Activated naive CD4-positive, alpha-beta T cell treated with anti-CD3 and anti-CD28 coated beads for 36 hours (primary cell): ENCODE measurements at regions of chr2 and their contacts with region 1.

Region 1: GRCh38 chr2:172985139-172985901 is 90.3 kb upstream of the MAP3K20 start:
- DNase-seq: no peak
- H3K4me3 Mint-ChIP-seq: no peak overlapping the region
- H3K27ac Mint-ChIP-seq: peak overlapping the region; percentile 43
- H3K4me1 Mint-ChIP-seq: peaks cover 13% of the 10 kb centered on the region
- H3K27me3 Mint-ChIP-seq: no peaks in the 10 kb centered on the region

Region 2: GRCh38 chr2:172938713-172939375 is 46.5 kb before region 1 on chr2:
- CTCF ChIA-PET with region 1: no interaction called
- intact Hi-C with region 1: no loop called
- DNase-seq: no peak
- H3K4me3 Mint-ChIP-seq: no peak overlapping the region
- H3K27ac Mint-ChIP-seq: no peak overlapping the region
- H3K4me1 Mint-ChIP-seq: peaks cover 10% of the 10 kb centered on the region
- H3K27me3 Mint-ChIP-seq: no peaks in the 10 kb centered on the region

Region 3: DNA sequence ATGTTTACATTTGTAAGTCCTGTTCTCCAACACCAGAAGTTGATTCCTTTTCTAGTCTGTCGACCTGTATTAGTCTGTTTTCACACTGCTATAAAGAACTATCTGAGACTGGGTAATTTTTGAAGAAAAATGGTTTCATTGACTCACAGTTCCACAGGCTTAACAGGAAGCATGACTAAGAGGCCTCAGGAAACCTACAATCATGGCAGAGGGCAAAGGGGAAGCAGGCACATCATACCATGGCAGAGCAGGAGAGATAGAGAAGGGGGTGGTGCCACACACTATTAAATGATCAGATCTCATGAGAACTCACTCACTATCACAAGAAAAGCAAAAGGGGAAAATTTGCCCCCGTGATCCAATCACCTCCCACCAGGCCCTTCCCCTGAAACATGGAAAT is 22.5 kb before region 1 on chr2:
- CTCF ChIA-PET with region 1: interaction called, 3 read pairs
- intact Hi-C with region 1: loop called (anchors 2 kb)
- DNase-seq: peak; percentile 44
- H3K4me3 Mint-ChIP-seq: no peak overlapping the region
- H3K27ac Mint-ChIP-seq: peak overlapping the region; percentile 66
- H3K4me1 Mint-ChIP-seq: peaks cover 18% of the 10 kb centered on the region
- H3K27me3 Mint-ChIP-seq: no peaks in the 10 kb centered on the region

Region 4: DNA sequence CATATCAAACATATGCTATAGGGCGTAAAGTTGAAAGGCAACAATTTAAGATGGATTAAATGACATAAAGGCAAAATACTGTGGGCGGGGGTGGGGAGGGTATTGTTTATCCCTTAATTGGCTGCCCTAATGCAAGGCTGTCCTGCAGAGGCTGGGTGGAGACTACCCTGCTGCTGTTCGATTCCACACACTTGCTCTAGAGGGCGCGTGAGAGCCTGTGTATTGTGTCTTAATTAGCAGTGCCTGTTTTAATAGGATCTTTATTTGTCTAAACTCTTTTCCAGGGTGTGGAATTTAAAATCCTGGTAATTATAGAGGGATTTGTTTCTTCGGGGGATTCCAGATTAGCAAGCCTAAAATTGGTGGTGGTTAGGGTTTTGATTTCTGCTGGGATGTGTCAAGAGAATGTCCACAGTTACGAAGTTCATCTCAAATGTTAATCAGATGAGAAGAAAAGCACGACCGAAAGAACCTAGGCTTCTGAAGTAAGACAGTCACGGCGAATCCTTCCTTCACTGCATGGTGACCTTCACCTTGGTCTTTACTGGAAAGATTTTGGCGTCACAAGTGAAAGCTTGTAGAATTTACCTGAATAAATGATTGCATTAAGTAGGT is 13.2 kb before region 1 on chr2:
- CTCF ChIA-PET with region 1: interaction called, 4 read pairs
- intact Hi-C with region 1: loop called (anchors 2 kb)
- DNase-seq: peak; percentile 70
- H3K4me3 Mint-ChIP-seq: no peak overlapping the region
- H3K27ac Mint-ChIP-seq: no peak overlapping the region
- H3K4me1 Mint-ChIP-seq: peaks cover 23% of the 10 kb centered on the region
- H3K27me3 Mint-ChIP-seq: peaks cover 14% of the 10 kb centered on the region

Region 5: GRCh38 chr2:173134703-173135102 is 149.4 kb after region 1 on chr2:
- CTCF ChIA-PET with region 1: no interaction called
- intact Hi-C with region 1: loop called (anchors 5 kb)
- DNase-seq: peak; percentile 18
- H3K4me3 Mint-ChIP-seq: no peak overlapping the region
- H3K27ac Mint-ChIP-seq: no peak overlapping the region
- H3K4me1 Mint-ChIP-seq: peaks cover 46% of the 10 kb centered on the region
- H3K27me3 Mint-ChIP-seq: peaks cover 40% of the 10 kb centered on the region